ENCODE measurements at regions of chr19 and their contacts with region 1.

Region 1: GRCh38 chr19:4811328-4812131 is 20.0 kb downstream of the TICAM1 start:
- DNase-seq: peak; percentile 74 to 88 (median 86)
- H3K4me3 ChIP-seq: no peak overlapping the region
- H3K27ac ChIP-seq: no peak overlapping the region
- H3K4me1 ChIP-seq: no peaks in the 10 kb centered on the region
- H3K27me3 ChIP-seq: no peaks in the 10 kb centered on the region
- CTCF ChIP-seq: peak; percentile 68 to 83 (median 81)
- EP300 ChIP-seq: no peak
- POLR2A ChIP-seq: no peak

Region 2: GRCh38 chr19:4851551-4852290 is 40.2 kb after region 1 on chr19:
- intact Hi-C with region 1: loop called (anchors 2 to 5 kb)
- DNase-seq: peak; percentile 61 to 82 (median 79)
- H3K4me3 ChIP-seq: no peak overlapping the region
- H3K27ac ChIP-seq: no peak overlapping the region
- H3K4me1 ChIP-seq: peaks cover 1% of the 10 kb centered on the region
- H3K27me3 ChIP-seq: no peaks in the 10 kb centered on the region
- CTCF ChIP-seq: peak; percentile 52 to 81 (median 78)
- EP300 ChIP-seq: no peak
- POLR2A ChIP-seq: no peak

Region 3: GRCh38 chr19:4909897-4910593 is 98.5 kb after region 1 on chr19:
- intact Hi-C with region 1: loop called in 3 of 4 experiments (anchors 2 kb)
- DNase-seq: peak; percentile 86 to 95 (median 90)
- H3K4me3 ChIP-seq: peak overlapping the region; percentile 68
- H3K27ac ChIP-seq: no peak overlapping the region
- H3K4me1 ChIP-seq: peaks cover 5% of the 10 kb centered on the region
- H3K27me3 ChIP-seq: no peaks in the 10 kb centered on the region
- CTCF ChIP-seq: no peak
- EP300 ChIP-seq: no peak
- POLR2A ChIP-seq: no peak